HCT116 (cell line): ENCODE measurements at regions of chr5 and their contacts with region 1.

Region 1: DNA sequence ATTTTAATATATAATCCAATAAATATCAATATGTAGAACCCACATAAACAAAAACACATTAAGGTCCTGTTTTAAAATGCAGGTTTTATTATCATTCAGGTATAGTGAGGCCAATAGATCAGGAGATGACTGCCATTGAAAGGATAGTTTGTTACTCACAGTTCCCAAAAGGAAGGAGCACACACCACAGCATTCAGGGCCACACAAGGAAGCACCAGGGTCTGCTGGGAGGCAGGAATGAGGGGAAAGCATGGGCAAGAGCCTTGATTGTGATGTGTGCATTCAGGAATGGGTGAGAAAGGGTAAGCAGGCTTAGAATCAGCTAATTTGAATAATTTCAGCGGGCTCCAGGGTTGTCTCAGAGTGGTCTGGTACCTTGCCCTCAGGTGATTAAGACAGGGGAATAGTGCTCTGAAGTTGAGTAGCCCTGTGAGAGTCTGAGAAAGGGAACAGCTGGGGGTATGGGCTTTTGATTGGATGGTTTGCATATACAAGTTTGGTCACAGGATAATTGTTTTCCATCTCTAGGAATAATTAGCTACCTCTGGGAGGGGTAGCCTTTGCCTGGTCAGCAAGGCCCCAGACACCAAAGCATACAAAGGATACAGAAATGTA is 19.8 kb upstream of the OTULIN start:
- DNase-seq: no peak
- ATAC-seq: no peak
- H3K4me3 ChIP-seq: no peak overlapping the region
- H3K27ac ChIP-seq: no peak overlapping the region
- H3K4me1 ChIP-seq: no peaks in the 10 kb centered on the region
- H3K27me3 ChIP-seq: peaks cover 18% of the 10 kb centered on the region
- CTCF ChIP-seq: no peak
- POLR2A ChIP-seq: no peak
- RAD21 ChIP-seq: no peak

Region 2: DNA sequence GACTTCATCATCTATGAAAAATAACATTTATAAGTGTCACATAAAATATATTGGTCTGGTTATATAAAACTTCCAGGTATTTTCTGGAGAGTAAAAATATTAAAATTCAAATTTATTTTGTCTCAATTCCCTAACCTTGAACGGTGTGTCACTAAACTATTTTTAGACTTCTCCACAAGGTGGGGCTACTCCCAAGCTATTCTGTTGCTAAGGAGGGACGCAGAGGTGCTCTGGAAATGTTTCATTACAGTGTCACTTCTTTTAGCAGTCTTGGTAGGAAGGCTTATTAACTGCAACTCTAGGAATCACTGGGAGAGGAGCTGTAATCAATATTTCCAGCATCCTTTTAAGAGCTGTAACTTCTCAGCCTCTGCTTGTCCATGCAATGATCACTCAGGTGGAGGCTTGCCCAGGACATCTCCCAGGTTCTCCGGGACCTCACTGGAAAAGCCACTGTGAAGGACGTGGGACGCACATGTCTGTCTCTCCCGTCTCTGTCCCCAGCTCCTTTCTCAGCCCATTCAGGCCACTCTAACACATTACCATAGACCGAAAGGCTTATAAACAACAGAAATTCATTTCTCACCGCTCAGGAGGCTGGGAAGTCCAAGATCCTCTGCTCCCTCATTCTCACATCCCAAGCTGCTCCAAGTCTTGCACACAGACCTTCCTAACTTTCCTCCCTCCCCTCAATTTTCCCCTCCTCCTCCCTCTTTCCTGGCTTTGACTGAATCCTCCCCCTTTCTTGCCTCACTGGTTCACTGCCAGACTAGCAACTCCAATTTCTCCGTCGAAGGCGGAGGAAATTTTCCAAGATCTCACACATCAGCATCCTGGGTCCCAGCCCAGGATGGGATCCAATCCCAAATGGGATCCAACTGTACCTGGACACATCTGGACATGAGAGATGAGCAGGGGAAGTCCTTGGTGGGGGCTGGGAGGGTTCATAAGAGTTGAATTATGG is 667.6 kb before region 1 on chr5:
- CTCF ChIA-PET with region 1: interaction called, 17 read pairs
- POLR2A ChIA-PET with region 1: no interaction called
- RAD21 ChIA-PET with region 1: no interaction called
- intact Hi-C with region 1: loop called (anchors 1 kb)
- DNase-seq: peak; percentile 26
- ATAC-seq: peak; percentile 91
- H3K4me3 ChIP-seq: no peak overlapping the region
- H3K27ac ChIP-seq: no peak overlapping the region
- H3K4me1 ChIP-seq: 0 out of 4 replicates have a peak, but pooled peaks cover 0 to 4% of the 10 kb centered on the region in 2 experiments
- H3K27me3 ChIP-seq: 0 out of 2 replicates have a peak, but pooled peaks cover 10% of the 10 kb centered on the region
- CTCF ChIP-seq: peak; percentile 53 to 68 (median 54); a peak in 5 of 6 replicates
- POLR2A ChIP-seq: no peak
- RAD21 ChIP-seq: peak; percentile 78

Region 3: DNA sequence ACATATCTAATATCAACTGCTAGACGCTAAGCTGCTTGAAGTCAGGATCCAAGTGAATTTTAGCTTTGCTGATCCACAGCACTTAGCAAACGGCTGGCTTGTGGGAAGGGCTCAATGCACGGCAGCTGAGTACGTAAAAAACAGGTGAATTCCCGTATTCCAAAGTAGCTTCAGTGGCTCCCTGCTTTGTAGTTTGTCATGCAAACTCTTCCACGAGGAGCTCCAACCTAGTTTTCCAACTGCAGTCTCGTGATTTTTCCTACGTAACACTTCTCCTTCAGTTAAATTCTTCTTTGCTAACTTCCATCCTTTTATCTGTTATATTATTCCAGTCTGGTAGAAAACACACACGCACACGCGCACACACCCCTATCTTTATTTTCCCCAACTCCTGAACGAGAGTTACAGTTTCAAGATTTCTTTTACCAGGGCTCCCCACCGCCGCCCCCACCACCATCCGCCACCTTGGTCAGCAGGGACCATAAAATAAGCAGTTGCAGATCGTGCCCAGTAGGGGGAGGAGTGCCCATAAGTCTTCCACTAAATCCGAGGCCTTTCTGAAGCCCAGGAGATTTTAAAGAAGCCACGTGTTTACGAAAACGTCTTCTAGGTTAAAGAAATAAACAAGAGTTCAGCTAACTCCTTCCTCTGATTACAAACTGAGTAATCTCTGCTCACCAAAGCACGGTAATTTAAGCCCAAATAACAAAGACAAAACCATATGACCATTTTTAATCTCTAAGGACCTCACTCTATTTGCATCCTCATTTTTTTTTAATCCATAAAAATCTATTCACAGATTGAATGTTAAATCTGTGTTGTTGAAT is 536.3 kb before region 1 on chr5:
- CTCF ChIA-PET with region 1: no interaction called
- POLR2A ChIA-PET with region 1: no interaction called
- RAD21 ChIA-PET with region 1: no interaction called
- intact Hi-C with region 1: loop called (anchors 10 kb)
- DNase-seq: peak; percentile 71
- ATAC-seq: peak; percentile 85
- H3K4me3 ChIP-seq: peak overlapping the region in 1 of 2 experiments; percentile 27; a peak in 2 of 4 replicates
- H3K27ac ChIP-seq: no peak overlapping the region
- H3K4me1 ChIP-seq: peaks cover 18 to 40% of the 10 kb centered on the region in 2 experiments
- H3K27me3 ChIP-seq: no peaks in the 10 kb centered on the region
- CTCF ChIP-seq: peak; percentile 57 to 80 (median 73); a peak in 5 of 6 replicates
- POLR2A ChIP-seq: no peak
- RAD21 ChIP-seq: peak; percentile 82

Region 4: GRCh38 chr5:14364576-14365472 is 279.9 kb before region 1 on chr5:
- CTCF ChIA-PET with region 1: interaction called, 20 read pairs
- POLR2A ChIA-PET with region 1: no interaction called
- RAD21 ChIA-PET with region 1: no interaction called
- intact Hi-C with region 1: no loop called
- DNase-seq: peak; percentile 13
- ATAC-seq: peak; percentile 95
- H3K4me3 ChIP-seq: no peak overlapping the region
- H3K27ac ChIP-seq: no peak overlapping the region
- H3K4me1 ChIP-seq: no peaks in the 10 kb centered on the region
- H3K27me3 ChIP-seq: no peaks in the 10 kb centered on the region
- CTCF ChIP-seq: peak; percentile 54 to 90 (median 87); a peak in 5 of 6 replicates
- POLR2A ChIP-seq: no peak
- RAD21 ChIP-seq: peak; percentile 60

Region 5: DNA sequence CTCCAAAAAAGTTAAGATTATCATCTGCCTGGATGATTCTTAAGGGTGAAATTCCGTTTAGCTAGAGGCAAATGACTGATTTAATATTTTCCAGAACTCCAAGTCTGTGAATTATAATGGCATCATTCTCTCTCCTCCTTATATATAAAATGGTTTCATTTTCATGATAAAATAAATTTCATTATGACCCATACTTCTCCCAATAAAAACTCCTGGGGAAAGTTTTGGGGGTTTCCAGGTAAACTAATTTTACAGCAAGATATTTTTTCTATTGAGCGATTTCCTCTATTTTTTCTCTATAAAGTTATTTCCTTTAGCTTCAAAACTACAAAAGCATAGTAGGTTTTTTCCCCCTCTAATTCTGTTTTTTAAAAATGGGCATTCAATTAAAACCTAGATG is 12.2 kb after region 1 on chr5:
- CTCF ChIA-PET with region 1: interaction called, 11 read pairs
- POLR2A ChIA-PET with region 1: no interaction called
- RAD21 ChIA-PET with region 1: no interaction called
- intact Hi-C with region 1: no loop called
- DNase-seq: no peak
- ATAC-seq: no peak
- H3K4me3 ChIP-seq: no peak overlapping the region
- H3K27ac ChIP-seq: no peak overlapping the region
- H3K4me1 ChIP-seq: no peaks in the 10 kb centered on the region
- H3K27me3 ChIP-seq: no peaks in the 10 kb centered on the region
- CTCF ChIP-seq: no peak
- POLR2A ChIP-seq: no peak
- RAD21 ChIP-seq: no peak

Region 6: DNA sequence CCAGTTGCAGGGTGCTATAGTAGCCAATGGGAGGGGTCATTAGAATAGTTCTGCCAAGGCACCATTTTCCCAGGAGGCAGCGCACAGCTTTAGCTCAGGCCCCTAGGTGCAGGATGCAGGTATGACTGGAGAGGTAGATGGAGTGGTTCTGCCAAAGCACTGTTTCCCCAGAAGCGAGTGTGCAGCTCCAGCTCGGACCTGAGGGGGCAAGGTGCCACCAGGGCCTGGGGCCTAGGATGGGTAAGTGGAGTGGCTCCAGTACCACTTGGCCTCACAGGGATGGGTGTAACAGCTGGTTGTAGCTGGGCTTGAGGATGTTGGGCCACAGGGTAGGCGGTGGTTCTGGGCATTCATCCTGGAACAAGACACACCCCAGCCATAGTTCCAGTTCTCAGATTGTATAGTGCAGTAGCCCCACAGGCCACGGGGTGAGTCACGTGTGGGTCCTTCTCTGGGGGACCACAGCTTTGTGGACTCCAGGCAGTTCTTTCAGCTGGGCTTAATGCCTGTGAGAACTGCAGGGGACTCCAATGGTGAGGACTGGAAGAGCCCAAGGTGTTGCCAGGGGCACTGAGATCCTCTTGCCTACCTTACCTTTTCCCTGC is 412.4 kb after region 1 on chr5:
- CTCF ChIA-PET with region 1: no interaction called
- POLR2A ChIA-PET with region 1: no interaction called
- RAD21 ChIA-PET with region 1: no interaction called
- intact Hi-C with region 1: no loop called
- DNase-seq: no peak
- ATAC-seq: no peak
- H3K4me3 ChIP-seq: no peak overlapping the region
- H3K27ac ChIP-seq: no peak overlapping the region
- H3K4me1 ChIP-seq: no peaks in the 10 kb centered on the region
- H3K27me3 ChIP-seq: no peaks in the 10 kb centered on the region
- CTCF ChIP-seq: no peak
- POLR2A ChIP-seq: no peak
- RAD21 ChIP-seq: no peak